ENCODE measurements at regions of chr4 and their contacts with region 1.

Region 1: GRCh38 chr4:152100379-152101201 is 339.8 kb upstream of the GATB start:
- DNase-seq: peak; percentile 40 to 96 (median 95)
- ATAC-seq: peak; percentile 90
- H3K4me3 ChIP-seq: peak overlapping the region; percentile 58
- H3K4me3 Mint-ChIP-seq: peak overlapping the region; percentile 72 to 98 (median 87)
- H3K27ac ChIP-seq: peak overlapping the region; percentile 89
- H3K27ac Mint-ChIP-seq: peak overlapping the region; percentile 95 to 99 (median 98)
- H3K4me1 ChIP-seq: peaks cover 93 to 94% of the 10 kb centered on the region in 2 donors
- H3K4me1 Mint-ChIP-seq: peaks cover 62 to 96% (median 92%) of the 10 kb centered on the region in 7 donors
- H3K27me3 ChIP-seq: no peaks in the 10 kb centered on the region
- H3K27me3 Mint-ChIP-seq: no peaks in the 10 kb centered on the region

Region 2: DNA sequence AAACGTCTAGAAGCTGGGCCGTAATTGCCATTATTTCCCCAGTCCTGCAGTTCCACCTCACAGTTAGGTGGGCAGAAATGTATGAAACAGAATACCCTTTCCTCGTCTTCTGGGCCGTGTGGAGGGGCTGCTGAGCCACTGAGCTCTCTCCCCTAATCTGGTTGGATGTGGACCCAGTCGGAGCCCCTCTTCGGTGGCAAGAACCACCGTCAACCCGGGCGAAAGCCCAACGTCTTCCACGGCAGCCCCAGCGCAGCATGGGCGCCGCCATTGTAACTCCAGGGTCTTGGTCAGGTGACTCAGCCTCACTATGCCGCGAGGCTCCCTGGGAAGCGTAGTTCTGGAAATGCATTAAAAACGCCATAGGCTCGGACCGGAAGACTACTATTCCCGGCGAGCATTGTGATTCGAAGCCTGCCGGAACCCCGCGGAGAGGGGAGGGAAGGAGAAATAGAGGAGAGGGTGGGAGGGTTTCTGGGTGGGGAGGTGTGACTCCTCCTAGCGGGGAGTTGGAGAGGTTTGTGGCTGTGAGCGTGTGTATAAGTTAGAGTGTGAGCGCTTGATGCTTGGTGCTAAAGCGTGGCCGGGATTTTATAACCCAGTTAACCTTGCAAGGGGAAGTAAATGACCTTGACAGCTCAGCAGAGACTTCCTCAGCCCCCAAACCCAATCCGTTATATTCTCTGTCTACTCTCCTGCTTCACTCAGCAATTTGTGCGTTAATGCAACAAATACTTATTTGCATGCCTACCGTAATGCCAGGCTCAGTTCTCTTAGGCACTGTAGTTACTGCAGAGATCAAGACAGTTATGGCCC is 339.7 kb before region 1 on chr4 and contains the start of gene GATB:
- CTCF ChIA-PET with region 1: no interaction called
- POLR2A ChIA-PET with region 1: no interaction called
- intact Hi-C with region 1: loop called (anchors 1 kb)
- DNase-seq: peak; percentile 67 to 97 (median 93)
- ATAC-seq: peak; percentile 99
- H3K4me3 ChIP-seq: peak within 1 kb of the TSS; percentile 87
- H3K4me3 Mint-ChIP-seq: peak within 1 kb of the TSS; percentile 88 to 99 (median 98)
- H3K27ac ChIP-seq: peak within 1 kb of the TSS; percentile 69
- H3K27ac Mint-ChIP-seq: peak within 1 kb of the TSS; percentile 94 to 99 (median 98)
- H3K4me1 ChIP-seq: peaks cover 9 to 13% of the 10 kb centered on the region in 2 donors
- H3K4me1 Mint-ChIP-seq: peaks cover 7 to 24% (median 18%) of the 10 kb centered on the region in 7 donors
- H3K27me3 ChIP-seq: no peaks in the 10 kb centered on the region
- H3K27me3 Mint-ChIP-seq: peaks cover 0 to 8% (median 4%) of the 10 kb centered on the region in 5 donors
- total RNA-seq, gene GATB: 10.5 to 17.3 (median 14.2) TPM

Region 3: DNA sequence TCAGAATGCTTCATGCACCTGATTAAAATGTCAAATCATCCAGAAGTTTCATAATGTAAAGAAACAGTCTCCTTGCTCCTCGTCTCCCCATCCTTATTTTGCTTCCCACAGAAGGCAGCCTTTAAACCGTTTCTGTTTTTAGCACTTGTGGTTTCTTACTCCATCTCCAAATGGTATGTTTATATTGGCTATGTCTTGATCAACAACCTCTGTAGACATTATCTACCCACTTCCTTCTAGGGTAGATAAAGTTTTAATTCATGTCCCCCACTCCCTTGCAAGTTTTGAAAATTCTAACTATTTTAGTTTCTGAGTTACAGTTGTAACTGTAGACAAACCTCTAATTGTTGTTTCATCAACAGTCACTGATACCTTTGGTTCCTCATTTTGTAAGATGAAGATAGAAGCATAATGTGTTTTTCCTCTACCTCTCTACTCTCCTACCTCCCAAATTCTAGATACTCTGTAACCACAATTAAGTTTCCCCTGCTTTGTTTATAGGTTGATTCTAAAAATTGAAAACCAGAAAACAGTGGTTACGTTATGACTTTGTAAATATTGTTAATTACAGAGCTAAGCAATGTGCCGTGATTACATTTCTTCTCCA is 48.0 kb before region 1 on chr4:
- CTCF ChIA-PET with region 1: no interaction called
- POLR2A ChIA-PET with region 1: interaction called, 6 read pairs
- intact Hi-C with region 1: loop called in 1 of 2 experiments (anchors 2 kb)
- DNase-seq: no peak
- ATAC-seq: no peak
- H3K4me3 ChIP-seq: no peak overlapping the region
- H3K4me3 Mint-ChIP-seq: peak overlapping the region in 6 of 10 donors; percentile 2 to 35 (median 14)
- H3K27ac ChIP-seq: no peak overlapping the region
- H3K27ac Mint-ChIP-seq: peak overlapping the region in 7 of 9 donors; percentile 12 to 69 (median 55)
- H3K4me1 ChIP-seq: peaks cover 11 to 12% of the 10 kb centered on the region in 2 donors
- H3K4me1 Mint-ChIP-seq: peaks cover 15 to 32% (median 21%) of the 10 kb centered on the region in 7 donors
- H3K27me3 ChIP-seq: no peaks in the 10 kb centered on the region
- H3K27me3 Mint-ChIP-seq: peaks cover 0 to 10% (median 0%) of the 10 kb centered on the region in 5 donors

Region 4: GRCh38 chr4:152112887-152113286 is 12.3 kb after region 1 on chr4:
- CTCF ChIA-PET with region 1: interaction called, 4 read pairs
- POLR2A ChIA-PET with region 1: interaction called, 63 read pairs
- intact Hi-C with region 1: loop called (anchors 1 kb)
- DNase-seq: no peak
- ATAC-seq: peak; percentile 25
- H3K4me3 ChIP-seq: no peak overlapping the region
- H3K4me3 Mint-ChIP-seq: peak overlapping the region in 1 of 10 donors; percentile 1
- H3K27ac ChIP-seq: no peak overlapping the region
- H3K27ac Mint-ChIP-seq: peak overlapping the region; percentile 4 to 100 (median 91)
- H3K4me1 ChIP-seq: peaks cover 29 to 70% of the 10 kb centered on the region in 2 donors
- H3K4me1 Mint-ChIP-seq: peaks cover 60 to 96% (median 92%) of the 10 kb centered on the region in 7 donors
- H3K27me3 ChIP-seq: no peaks in the 10 kb centered on the region
- H3K27me3 Mint-ChIP-seq: no peaks in the 10 kb centered on the region

Region 5: GRCh38 chr4:152185786-152186550 is 85.4 kb after region 1 on chr4:
- CTCF ChIA-PET with region 1: interaction called, 3 read pairs
- POLR2A ChIA-PET with region 1: interaction called, 8 read pairs
- intact Hi-C with region 1: loop called in 1 of 2 experiments (anchors 1 kb)
- DNase-seq: no peak
- ATAC-seq: no peak
- H3K4me3 ChIP-seq: no peak overlapping the region
- H3K4me3 Mint-ChIP-seq: no peak overlapping the region
- H3K27ac ChIP-seq: no peak overlapping the region
- H3K27ac Mint-ChIP-seq: peak overlapping the region in 2 of 9 donors; percentile 44 to 52
- H3K4me1 ChIP-seq: peaks cover 0 to 16% of the 10 kb centered on the region in 2 donors
- H3K4me1 Mint-ChIP-seq: peaks cover 13 to 74% (median 39%) of the 10 kb centered on the region in 7 donors
- H3K27me3 ChIP-seq: no peaks in the 10 kb centered on the region
- H3K27me3 Mint-ChIP-seq: no peaks in the 10 kb centered on the region

Region 6: GRCh38 chr4:152352622-152353116 is 252.1 kb after region 1 on chr4:
- CTCF ChIA-PET with region 1: interaction called, 11 read pairs
- POLR2A ChIA-PET with region 1: interaction called, 5 read pairs
- intact Hi-C with region 1: loop called in 1 of 2 experiments (anchors 1 kb)
- DNase-seq: peak in 6 of 9 donors; percentile 3 to 40 (median 32)
- ATAC-seq: peak; percentile 68
- H3K4me3 ChIP-seq: no peak overlapping the region
- H3K4me3 Mint-ChIP-seq: peak overlapping the region in 9 of 10 donors; percentile 9 to 68 (median 46)
- H3K27ac ChIP-seq: no peak overlapping the region
- H3K27ac Mint-ChIP-seq: peak overlapping the region in 2 of 9 donors; percentile 66 to 67
- H3K4me1 ChIP-seq: peaks cover 0 to 8% of the 10 kb centered on the region in 2 donors
- H3K4me1 Mint-ChIP-seq: peaks cover 11 to 39% (median 22%) of the 10 kb centered on the region in 7 donors
- H3K27me3 ChIP-seq: no peaks in the 10 kb centered on the region
- H3K27me3 Mint-ChIP-seq: no peaks in the 10 kb centered on the region

Measured in naive thymus-derived CD4-positive, alpha-beta T cell (primary cell).